PC-9 (cell line): ENCODE measurements at regions of chr10 and their contacts with region 1.

Region 1: DNA sequence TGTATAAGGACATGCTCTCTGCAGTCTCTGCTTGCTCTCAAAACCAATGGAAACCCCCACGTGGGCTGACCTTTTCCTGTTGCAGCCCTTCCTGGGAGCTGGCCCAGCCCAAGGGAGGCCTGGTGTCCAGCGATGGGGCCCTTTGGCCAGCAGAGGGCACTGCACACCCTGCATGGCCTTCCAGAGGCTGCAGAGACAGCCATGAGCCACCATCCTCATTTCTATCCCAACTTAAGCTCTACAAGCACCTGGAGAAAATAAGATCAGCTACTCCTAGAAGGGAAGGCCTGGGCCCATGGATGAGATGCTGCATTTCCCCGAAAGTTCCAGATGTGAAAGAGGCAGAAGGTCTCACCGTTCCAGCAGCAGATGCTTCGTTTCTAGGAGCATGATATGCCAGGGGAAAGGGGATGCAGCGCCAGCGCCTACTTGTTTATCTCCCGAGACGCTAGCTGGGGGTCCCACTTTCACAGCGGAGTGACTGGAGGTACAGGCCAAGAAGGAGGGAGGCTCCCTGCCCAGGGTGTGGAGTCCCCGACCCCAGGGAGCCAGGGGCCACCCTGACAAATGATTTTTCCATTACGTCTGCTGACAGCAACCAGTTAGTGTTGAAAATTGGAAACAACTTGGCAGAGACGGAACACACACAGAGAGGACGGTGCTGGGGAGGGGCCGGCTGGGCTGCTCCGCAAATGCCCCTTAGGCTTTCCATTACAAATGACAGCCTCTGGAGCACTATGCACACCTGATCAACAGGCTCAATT is 106.4 kb downstream of the ZRANB1 start:
- DNase-seq: peak; percentile 44 to 72
- H3K4me3 ChIP-seq: no peak overlapping the region
- H3K27ac ChIP-seq: no peak overlapping the region
- H3K4me1 ChIP-seq: peaks cover 32% of the 10 kb centered on the region
- H3K27me3 ChIP-seq: no peaks in the 10 kb centered on the region
- CTCF ChIP-seq: peak; percentile 85

Region 2: DNA sequence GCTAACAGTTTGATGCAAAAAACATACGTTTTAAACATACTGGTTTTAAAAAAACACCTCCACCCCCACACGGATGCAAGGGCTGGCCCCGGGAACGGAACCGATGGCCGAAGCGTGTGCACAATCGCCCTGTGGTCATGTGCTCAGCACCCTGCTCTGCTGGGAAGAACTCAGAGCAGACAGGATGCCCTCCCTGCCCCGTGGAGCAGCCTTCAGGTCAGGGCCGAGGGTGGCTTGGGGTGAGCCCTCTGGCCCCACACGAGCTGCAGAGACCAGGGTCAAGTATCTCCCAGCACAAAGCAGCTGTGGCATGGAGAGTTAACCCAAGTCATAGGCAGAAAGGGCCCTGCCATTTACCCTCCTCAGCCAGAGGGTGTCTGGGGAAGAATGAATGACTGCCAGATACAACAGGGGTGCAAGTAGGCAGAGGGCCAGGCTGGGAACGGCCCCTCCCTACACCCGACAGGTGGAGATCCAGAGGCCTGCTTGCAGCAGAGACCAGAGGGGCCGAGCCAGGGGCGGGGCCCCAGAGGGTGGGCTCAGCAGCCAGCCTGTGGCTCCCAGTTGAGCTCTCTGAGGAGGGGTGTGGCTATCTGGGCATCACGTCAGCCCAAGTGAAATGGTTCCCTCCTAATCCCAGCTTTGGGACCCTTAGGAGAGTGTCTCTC is 49.5 kb before region 1 on chr10:
- CTCF ChIA-PET with region 1: no interaction called
- POLR2A ChIA-PET with region 1: no interaction called
- intact Hi-C with region 1: no loop called
- DNase-seq: no peak
- H3K4me3 ChIP-seq: no peak overlapping the region
- H3K27ac ChIP-seq: no peak overlapping the region
- H3K4me1 ChIP-seq: no peaks in the 10 kb centered on the region
- H3K27me3 ChIP-seq: no peaks in the 10 kb centered on the region
- CTCF ChIP-seq: no peak

Region 3: GRCh38 chr10:125123476-125124114 is 75.3 kb after region 1 on chr10:
- CTCF ChIA-PET with region 1: interaction called, 3 read pairs
- POLR2A ChIA-PET with region 1: no interaction called
- intact Hi-C with region 1: loop called (anchors 5 kb)
- DNase-seq: peak; percentile 84 to 89
- H3K4me3 ChIP-seq: no peak overlapping the region
- H3K27ac ChIP-seq: peak overlapping the region; percentile 82
- H3K4me1 ChIP-seq: peaks cover 26% of the 10 kb centered on the region
- H3K27me3 ChIP-seq: no peaks in the 10 kb centered on the region
- CTCF ChIP-seq: no peak

Region 4: GRCh38 chr10:125375210-125375609 is 326.9 kb after region 1 on chr10:
- CTCF ChIA-PET with region 1: no interaction called
- POLR2A ChIA-PET with region 1: no interaction called
- intact Hi-C with region 1: loop called (anchors 5 kb)
- DNase-seq: peak; percentile 30 to 43
- H3K4me3 ChIP-seq: no peak overlapping the region
- H3K27ac ChIP-seq: no peak overlapping the region
- H3K4me1 ChIP-seq: no peaks in the 10 kb centered on the region
- H3K27me3 ChIP-seq: no peaks in the 10 kb centered on the region
- CTCF ChIP-seq: 0 out of 2 replicates have a peak, but pooled peaks have one; percentile 23

Region 5: GRCh38 chr10:125629763-125630376 is 581.6 kb after region 1 on chr10:
- CTCF ChIA-PET with region 1: no interaction called
- POLR2A ChIA-PET with region 1: no interaction called
- intact Hi-C with region 1: loop called (anchors 1 kb)
- DNase-seq: peak; percentile 4 to 65
- H3K4me3 ChIP-seq: no peak overlapping the region
- H3K27ac ChIP-seq: no peak overlapping the region
- H3K4me1 ChIP-seq: no peaks in the 10 kb centered on the region
- H3K27me3 ChIP-seq: no peaks in the 10 kb centered on the region
- CTCF ChIP-seq: peak; percentile 74